Body of pancreas (tissue), 4 donors: ENCODE measurements at regions of chr21 and their contacts with region 1.

Region 1: DNA sequence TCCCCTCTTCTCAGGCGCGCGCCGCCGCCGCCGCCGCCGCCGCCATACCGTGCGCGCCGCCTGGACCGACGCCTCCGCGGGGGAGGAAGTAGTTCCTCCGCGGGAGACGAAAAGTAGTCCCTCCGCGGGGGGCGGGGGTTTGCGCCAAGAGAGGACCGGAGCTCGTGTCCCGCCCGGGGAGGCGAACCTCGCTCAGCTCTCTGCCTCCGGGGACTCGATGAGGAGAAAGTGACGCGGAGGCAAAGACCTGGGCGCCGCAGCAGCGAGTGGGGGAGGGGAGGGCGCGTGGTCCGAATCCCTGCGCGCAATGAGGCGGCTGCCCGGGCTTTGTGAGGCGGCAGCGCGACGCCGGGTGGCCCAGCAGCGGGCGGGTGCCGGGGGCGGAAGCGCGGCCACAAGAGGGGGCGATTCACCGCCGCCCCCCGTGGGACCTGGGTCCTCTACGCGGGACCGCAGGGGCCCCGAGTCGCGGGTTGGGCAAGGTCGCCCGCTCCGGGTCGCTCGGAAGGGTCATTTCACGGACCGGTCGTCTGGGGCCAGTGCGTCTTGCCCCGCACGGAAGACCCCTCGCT is at the start of gene BRWD1:
- DNase-seq: peak; percentile 80 to 85 (median 82)
- ATAC-seq: peak; percentile 81
- H3K4me3 ChIP-seq: peak within 1 kb of the TSS; percentile 72 to 83
- H3K27ac ChIP-seq: peak within 1 kb of the TSS; percentile 94 to 98 (median 96)
- H3K4me1 ChIP-seq: peaks cover 26% of the 10 kb centered on the region
- H3K27me3 ChIP-seq: no peaks in the 10 kb centered on the region
- CTCF ChIP-seq: peak in 5 of 7 experiments; percentile 16 to 50 (median 33)
- POLR2A ChIP-seq: peak; percentile 70 to 83 (median 82)
- total RNA-seq, gene BRWD1: 53.7 to 75.2 TPM

Region 2: DNA sequence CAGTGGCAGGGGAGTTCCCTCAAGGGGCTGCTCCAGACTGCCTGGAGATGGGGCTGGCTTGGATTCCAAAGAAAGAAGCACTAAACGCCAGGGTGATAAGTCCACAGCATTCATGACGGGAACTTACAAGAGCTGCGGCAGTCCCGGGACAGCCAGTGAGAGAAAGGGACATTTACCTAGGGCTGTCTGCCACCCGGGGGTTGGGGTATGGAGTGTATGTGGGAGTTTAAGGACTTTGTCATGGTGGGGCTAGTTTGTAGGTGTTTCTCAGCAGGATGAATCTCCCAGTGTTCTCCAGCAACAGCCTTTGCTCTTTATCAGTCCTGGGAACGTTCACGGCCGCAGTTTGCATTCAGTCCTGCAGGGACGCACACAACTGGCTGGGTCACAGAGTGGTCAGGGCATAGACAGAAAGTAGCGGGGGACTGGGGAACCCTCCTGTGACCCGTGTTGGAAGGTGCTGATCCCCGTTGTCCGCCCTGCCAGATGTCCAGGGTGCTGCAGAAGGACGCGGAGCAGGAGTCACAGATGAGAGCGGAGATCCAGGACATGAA is 76.6 kb after region 1 on chr21:
- intact Hi-C with region 1: loop called (anchors 5 kb)
- DNase-seq: no peak
- ATAC-seq: no peak
- H3K4me3 ChIP-seq: no peak overlapping the region
- H3K27ac ChIP-seq: no peak overlapping the region
- H3K4me1 ChIP-seq: peaks cover 31% of the 10 kb centered on the region
- H3K27me3 ChIP-seq: no peaks in the 10 kb centered on the region
- CTCF ChIP-seq: no peak
- POLR2A ChIP-seq: no peak